ENCODE measurements at regions of chr13 and their contacts with region 1.

Region 1: GRCh38 chr13:29362849-29363604 is 232.5 kb downstream of the SLC7A1 start:
- DNase-seq: peak; percentile 41
- ATAC-seq: peak; percentile 83
- H3K4me3 Mint-ChIP-seq: no peak overlapping the region
- H3K27ac Mint-ChIP-seq: no peak overlapping the region
- H3K4me1 Mint-ChIP-seq: no peaks in the 10 kb centered on the region
- H3K27me3 Mint-ChIP-seq: peaks cover 8% of the 10 kb centered on the region
- CTCF ChIP-seq: peak; percentile 83

Region 2: GRCh38 chr13:28819735-28820098 is 543.3 kb before region 1 on chr13:
- CTCF ChIA-PET with region 1: interaction called, 6 read pairs
- POLR2A ChIA-PET with region 1: no interaction called
- intact Hi-C with region 1: loop called (anchors 10 kb)
- DNase-seq: peak; percentile 53
- ATAC-seq: peak; percentile 87
- H3K4me3 Mint-ChIP-seq: no peak overlapping the region
- H3K27ac Mint-ChIP-seq: no peak overlapping the region
- H3K4me1 Mint-ChIP-seq: peaks cover 2% of the 10 kb centered on the region
- H3K27me3 Mint-ChIP-seq: peaks cover 53% of the 10 kb centered on the region
- CTCF ChIP-seq: no peak

Region 3: DNA sequence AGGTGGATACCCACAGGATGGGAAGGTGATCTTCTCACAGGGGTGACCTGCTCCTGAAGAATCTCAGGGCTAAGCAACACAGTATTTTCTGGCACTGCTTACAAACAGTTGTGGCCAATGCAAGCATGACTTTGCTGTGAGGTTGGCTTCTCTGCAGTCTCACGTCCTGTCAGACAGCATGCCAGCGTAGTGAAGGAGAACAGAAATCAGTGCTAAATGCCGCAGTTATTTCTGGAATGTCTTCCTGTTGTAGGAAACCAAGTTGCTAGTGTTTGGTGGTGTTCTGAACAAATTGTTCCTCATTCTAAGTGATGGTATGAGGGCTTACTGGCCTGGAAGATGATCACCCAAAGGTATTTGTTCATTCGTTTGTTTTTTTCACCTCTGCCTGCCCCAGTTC is 222.8 kb before region 1 on chr13:
- CTCF ChIA-PET with region 1: no interaction called
- POLR2A ChIA-PET with region 1: no interaction called
- intact Hi-C with region 1: no loop called
- DNase-seq: no peak
- ATAC-seq: no peak
- H3K4me3 Mint-ChIP-seq: no peak overlapping the region
- H3K27ac Mint-ChIP-seq: no peak overlapping the region
- H3K4me1 Mint-ChIP-seq: no peaks in the 10 kb centered on the region
- H3K27me3 Mint-ChIP-seq: no peaks in the 10 kb centered on the region
- CTCF ChIP-seq: no peak

Region 4: GRCh38 chr13:29301027-29301426 is 62.0 kb before region 1 on chr13:
- CTCF ChIA-PET with region 1: no interaction called
- POLR2A ChIA-PET with region 1: no interaction called
- intact Hi-C with region 1: no loop called
- DNase-seq: no peak
- ATAC-seq: no peak
- H3K4me3 Mint-ChIP-seq: no peak overlapping the region
- H3K27ac Mint-ChIP-seq: no peak overlapping the region
- H3K4me1 Mint-ChIP-seq: no peaks in the 10 kb centered on the region
- H3K27me3 Mint-ChIP-seq: peaks cover 3% of the 10 kb centered on the region
- CTCF ChIP-seq: no peak

Measured in activated CD8-positive, alpha-beta T cell treated with anti-CD3 and anti-CD28 coated beads for 36 hours (primary cell).